ENCODE measurements at regions of chr12 and their contacts with region 1.

Region 1: DNA sequence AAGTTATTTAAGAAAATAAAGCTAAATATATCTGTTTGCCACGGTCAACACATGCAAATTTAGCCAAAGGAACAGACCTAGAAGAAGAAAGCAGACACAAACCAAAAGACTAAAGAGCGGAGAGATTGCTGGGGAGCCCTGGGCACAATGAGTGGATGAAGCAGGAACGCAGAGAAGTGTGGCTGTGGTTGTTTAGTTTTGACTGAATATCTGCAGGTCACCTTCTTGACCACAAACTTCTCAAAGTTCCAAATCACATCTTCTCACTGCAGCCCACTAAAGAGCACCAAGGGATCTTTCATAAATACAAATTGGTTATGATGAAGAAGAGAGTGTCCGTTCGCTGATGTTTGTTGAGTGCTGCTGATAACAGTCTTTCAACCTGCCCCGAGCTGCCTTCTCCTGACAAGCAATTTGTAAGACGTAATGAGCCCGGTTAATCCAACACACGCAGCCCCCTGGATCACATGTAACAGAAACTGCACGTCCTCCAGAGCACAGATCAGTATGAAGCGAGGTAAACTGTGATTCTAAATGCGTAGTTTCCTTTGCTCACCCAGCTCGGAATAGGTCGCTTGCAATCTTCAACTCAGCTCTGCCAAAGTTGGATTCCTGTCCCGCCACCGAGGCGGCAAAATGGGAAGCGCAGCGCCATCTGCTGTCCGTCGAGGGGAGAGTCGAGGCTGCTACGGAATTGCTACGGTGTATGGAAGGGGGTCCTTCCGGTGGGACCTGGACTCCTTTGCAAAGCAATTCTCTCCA is 120.8 kb downstream of the GXYLT1 start:
- DNase-seq: peak; percentile 91

Region 2: DNA sequence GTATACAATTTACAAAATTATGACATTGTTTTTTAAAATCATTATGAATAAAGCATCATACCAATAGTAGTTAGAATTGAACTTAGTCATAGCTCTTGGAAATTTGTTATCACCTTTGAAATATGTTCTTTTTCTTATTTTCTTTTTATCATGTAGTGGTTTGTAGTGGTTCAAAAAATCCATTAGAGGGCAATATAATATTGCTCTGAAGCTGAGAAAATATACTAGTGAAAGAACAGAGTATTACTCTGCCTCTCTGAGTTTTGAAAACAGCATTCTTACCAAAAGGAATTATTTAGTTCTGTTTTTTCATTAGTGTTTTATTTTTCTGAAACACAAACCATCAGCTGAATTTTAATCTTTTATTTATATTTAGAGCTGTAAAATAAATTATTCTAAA is 759.6 kb before region 1 on chr12:
- intact Hi-C with region 1: loop called (anchors 5 kb)
- DNase-seq: no peak

Region 3: DNA sequence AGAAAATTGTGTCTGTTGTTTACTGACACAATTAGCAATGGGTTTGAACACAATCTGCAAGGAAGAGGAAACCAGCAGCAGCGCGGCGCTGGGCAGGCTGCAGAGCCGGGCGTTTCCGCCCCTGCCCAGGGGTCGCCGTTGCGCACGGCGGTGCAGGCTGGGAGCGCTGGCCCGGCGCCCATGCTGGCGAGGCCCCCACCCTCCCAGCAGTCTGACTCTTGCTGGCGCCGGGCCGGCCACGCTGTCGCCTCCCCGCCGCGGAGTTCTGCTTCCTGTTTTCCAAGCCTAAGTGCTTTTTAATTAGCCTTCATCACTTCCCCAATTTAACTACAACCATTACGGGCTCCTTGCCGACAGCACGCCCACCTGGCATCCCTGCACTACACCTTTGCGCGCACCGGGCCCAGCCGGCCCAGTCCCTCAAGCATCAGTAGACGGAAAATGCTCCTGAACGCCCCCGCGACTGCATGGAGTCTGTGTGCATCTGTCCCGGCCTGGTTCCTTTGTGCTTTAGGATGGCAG is 91.4 kb before region 1 on chr12:
- intact Hi-C with region 1: loop called (anchors 5 kb)
- DNase-seq: peak; percentile 93

Region 4: GRCh38 chr12:42086031-42086430 is 62.1 kb after region 1 on chr12:
- intact Hi-C with region 1: no loop called
- DNase-seq: no peak

Region 5: GRCh38 chr12:43292699-43293098 is 1268.8 kb after region 1 on chr12:
- intact Hi-C with region 1: no loop called
- DNase-seq: no peak